Prostate gland (tissue), 2 donors: ENCODE measurements at regions of chr7 and their contacts with region 1.

Region 1: GRCh38 chr7:83984076-83984475 is 210.5 kb downstream of the SEMA3A start:
- DNase-seq: no peak
- H3K4me3 ChIP-seq: no peak overlapping the region
- H3K27ac ChIP-seq: no peak overlapping the region
- H3K4me1 ChIP-seq: no peaks in the 10 kb centered on the region
- H3K27me3 ChIP-seq: no peaks in the 10 kb centered on the region
- CTCF ChIP-seq: no peak
- POLR2A ChIP-seq: no peak

Region 2: GRCh38 chr7:84194543-84195271 is 210.6 kb after region 1 on chr7 and contains the start of gene SEMA3A:
- intact Hi-C with region 1: loop called (anchors 5 kb)
- DNase-seq: peak; percentile 10
- H3K4me3 ChIP-seq: peak within 1 kb of the TSS; percentile 30 to 33
- H3K27ac ChIP-seq: peak within 1 kb of the TSS; percentile 14 to 24
- H3K4me1 ChIP-seq: no peaks in the 10 kb centered on the region
- H3K27me3 ChIP-seq: no peaks in the 10 kb centered on the region
- CTCF ChIP-seq: peak in 1 of 4 experiments; percentile 23
- POLR2A ChIP-seq: no peak
- total RNA-seq, gene SEMA3A: 1.6 to 1.9 TPM

Region 3: DNA sequence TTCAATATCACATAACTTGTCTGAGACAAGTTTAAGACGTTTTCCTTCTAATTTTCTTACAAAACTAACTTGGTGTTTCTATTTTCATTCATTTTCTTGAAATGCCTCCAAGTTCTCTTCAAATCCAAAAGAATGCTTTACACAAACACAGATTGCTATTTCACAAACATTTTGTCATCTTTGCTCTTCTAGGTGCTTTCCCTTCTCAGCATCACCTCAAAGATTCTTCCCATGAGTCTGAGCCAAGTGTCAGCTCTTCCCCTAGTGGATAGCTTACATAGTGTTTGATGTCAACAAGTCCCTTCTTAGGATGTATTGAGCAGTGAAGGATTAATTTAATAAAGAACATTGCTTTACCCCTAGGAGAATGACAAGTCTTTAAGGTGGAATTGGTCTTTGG is 248.6 kb after region 1 on chr7:
- intact Hi-C with region 1: no loop called
- DNase-seq: no peak
- H3K4me3 ChIP-seq: no peak overlapping the region
- H3K27ac ChIP-seq: no peak overlapping the region
- H3K4me1 ChIP-seq: no peaks in the 10 kb centered on the region
- H3K27me3 ChIP-seq: no peaks in the 10 kb centered on the region
- CTCF ChIP-seq: no peak
- POLR2A ChIP-seq: no peak